ENCODE measurements at regions of chr10 and their contacts with region 1.

Region 1: GRCh38 chr10:28432210-28432676 is 100.7 kb upstream of the WAC start:
- DNase-seq: peak; percentile 75
- ATAC-seq: peak; percentile 99
- H3K4me3 ChIP-seq: no peak overlapping the region
- H3K27ac ChIP-seq: no peak overlapping the region
- H3K4me1 ChIP-seq: no peaks in the 10 kb centered on the region
- H3K27me3 ChIP-seq: peaks cover 7% of the 10 kb centered on the region
- CTCF ChIP-seq: peak; percentile 77
- POLR2A ChIP-seq: no peak
- RAD21 ChIP-seq: peak; percentile 78

Region 2: GRCh38 chr10:28444031-28444430 is 11.8 kb after region 1 on chr10:
- CTCF ChIA-PET with region 1: no interaction called
- POLR2A ChIA-PET with region 1: no interaction called
- dilution Hi-C with region 1: no loop called
- in situ Hi-C with region 1: no loop called
- intact Hi-C with region 1: no loop called
- DNase-seq: no peak
- ATAC-seq: no peak
- H3K4me3 ChIP-seq: no peak overlapping the region
- H3K27ac ChIP-seq: no peak overlapping the region
- H3K4me1 ChIP-seq: no peaks in the 10 kb centered on the region
- H3K27me3 ChIP-seq: peaks cover 13% of the 10 kb centered on the region
- CTCF ChIP-seq: no peak
- POLR2A ChIP-seq: no peak
- RAD21 ChIP-seq: no peak

Region 3: GRCh38 chr10:28533571-28534304 is 101.5 kb after region 1 on chr10:
- CTCF ChIA-PET with region 1: no interaction called
- POLR2A ChIA-PET with region 1: no interaction called
- dilution Hi-C with region 1: no loop called
- in situ Hi-C with region 1: no loop called
- intact Hi-C with region 1: loop called (anchors 2 kb)
- DNase-seq: peak; percentile 26
- ATAC-seq: peak; percentile 42
- H3K4me3 ChIP-seq: peak overlapping the region; percentile 92
- H3K27ac ChIP-seq: peak overlapping the region; percentile 99
- H3K4me1 ChIP-seq: no peaks in the 10 kb centered on the region; the same call in 1 of the 2 replicates
- H3K27me3 ChIP-seq: no peaks in the 10 kb centered on the region
- CTCF ChIP-seq: no peak
- POLR2A ChIP-seq: no peak
- RAD21 ChIP-seq: no peak

Region 4: GRCh38 chr10:28587970-28588290 is 155.7 kb after region 1 on chr10:
- CTCF ChIA-PET with region 1: interaction called, 5 read pairs
- POLR2A ChIA-PET with region 1: no interaction called
- dilution Hi-C with region 1: no loop called
- in situ Hi-C with region 1: no loop called
- intact Hi-C with region 1: loop called (anchors 2 kb)
- DNase-seq: peak; percentile 75
- ATAC-seq: peak; percentile 77
- H3K4me3 ChIP-seq: no peak overlapping the region
- H3K27ac ChIP-seq: no peak overlapping the region
- H3K4me1 ChIP-seq: peaks cover 12% of the 10 kb centered on the region
- H3K27me3 ChIP-seq: no peaks in the 10 kb centered on the region
- CTCF ChIP-seq: peak; percentile 34
- POLR2A ChIP-seq: no peak
- RAD21 ChIP-seq: peak; percentile 44

Region 5: DNA sequence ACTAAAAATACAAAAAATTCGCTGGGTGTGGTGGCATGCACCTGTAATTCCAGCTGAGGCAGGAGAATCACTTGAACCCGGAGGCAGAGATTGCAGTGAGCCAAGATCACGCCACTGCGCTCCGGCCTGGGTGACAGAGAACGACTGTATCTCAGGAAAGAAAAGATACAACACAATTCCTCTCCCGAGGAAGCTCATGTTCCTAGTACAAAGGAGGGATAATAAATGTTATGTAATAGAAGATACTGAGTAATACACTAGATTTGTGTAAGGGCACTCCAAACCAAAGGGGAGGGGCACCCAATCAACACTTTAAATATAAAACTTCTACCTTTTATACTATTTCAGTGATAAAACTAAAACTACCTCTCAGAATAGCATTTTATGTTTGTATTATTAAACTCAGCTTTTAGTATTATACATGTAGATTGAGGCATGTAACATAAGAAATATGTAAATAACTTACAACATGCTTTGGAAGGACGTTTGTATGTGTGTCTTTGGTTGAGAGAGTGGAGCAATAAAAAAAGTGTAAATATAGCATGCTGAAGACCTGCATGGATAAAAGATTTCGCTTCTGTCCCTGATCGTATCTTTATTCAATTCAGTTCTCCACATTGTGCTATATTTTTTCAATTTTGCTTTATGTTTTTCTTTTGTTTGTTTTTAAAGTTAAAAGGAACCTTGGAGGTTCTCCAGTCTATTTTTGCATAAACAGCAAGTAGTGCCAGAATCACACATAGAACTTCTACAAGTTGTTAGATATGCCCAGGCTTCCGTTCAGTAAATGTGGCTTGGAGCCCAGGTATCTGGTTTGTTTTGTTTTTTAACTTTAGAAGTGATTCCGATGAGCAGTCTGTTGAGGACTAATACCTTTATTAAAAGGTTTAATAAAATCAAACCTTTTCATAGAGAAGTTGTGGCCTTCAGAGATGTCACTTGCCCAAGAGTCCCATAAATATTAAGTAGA is 172.6 kb after region 1 on chr10:
- CTCF ChIA-PET with region 1: no interaction called
- POLR2A ChIA-PET with region 1: no interaction called
- dilution Hi-C with region 1: no loop called
- in situ Hi-C with region 1: no loop called
- intact Hi-C with region 1: loop called (anchors 1 kb)
- DNase-seq: no peak
- ATAC-seq: no peak
- H3K4me3 ChIP-seq: no peak overlapping the region
- H3K27ac ChIP-seq: no peak overlapping the region
- H3K4me1 ChIP-seq: no peaks in the 10 kb centered on the region
- H3K27me3 ChIP-seq: no peaks in the 10 kb centered on the region
- CTCF ChIP-seq: no peak
- POLR2A ChIP-seq: no peak
- RAD21 ChIP-seq: no peak

Region 6: DNA sequence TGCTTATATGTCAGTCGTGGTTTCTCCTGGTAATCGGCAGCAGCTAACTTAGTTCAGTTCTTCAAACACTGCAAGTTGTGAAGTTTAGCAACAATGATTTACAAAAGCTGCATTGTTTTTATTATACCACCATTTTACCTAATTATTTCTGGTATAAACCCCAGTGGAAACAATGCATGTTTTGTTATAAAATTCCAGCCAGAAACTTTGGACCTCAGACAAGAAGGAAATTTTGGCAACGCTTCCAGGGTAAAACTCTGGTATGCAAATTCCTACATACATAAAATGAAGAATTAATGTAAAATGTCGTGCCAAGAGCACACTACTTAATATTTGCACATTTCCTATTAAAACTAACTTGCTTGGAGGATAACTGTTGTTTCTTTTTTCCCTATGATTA is 579.3 kb after region 1 on chr10:
- CTCF ChIA-PET with region 1: interaction called, 11 read pairs
- POLR2A ChIA-PET with region 1: no interaction called
- dilution Hi-C with region 1: no loop called
- in situ Hi-C with region 1: no loop called
- intact Hi-C with region 1: no loop called
- DNase-seq: peak; percentile 15
- ATAC-seq: no peak
- H3K4me3 ChIP-seq: no peak overlapping the region
- H3K27ac ChIP-seq: no peak overlapping the region
- H3K4me1 ChIP-seq: peaks cover 2% of the 10 kb centered on the region; the same call in 1 of the 2 replicates
- H3K27me3 ChIP-seq: peaks cover 8% of the 10 kb centered on the region
- CTCF ChIP-seq: no peak
- POLR2A ChIP-seq: no peak
- RAD21 ChIP-seq: no peak